HepG2 (cell line): ENCODE measurements at regions of chr12 and their contacts with region 1.

Region 1: GRCh38 chr12:575948-576612 is 87.2 kb downstream of the NINJ2 start:
- DNase-seq: peak; percentile 79
- ATAC-seq: peak; percentile 68
- H3K4me3 ChIP-seq: 0 out of 6 replicates have a peak overlapping the region, but pooled peaks of 1 of the 3 experiments have one; percentile 12
- H3K27ac ChIP-seq: peak overlapping the region; percentile 86
- H3K4me1 ChIP-seq: peaks cover 94% of the 10 kb centered on the region
- H3K27me3 ChIP-seq: no peaks in the 10 kb centered on the region; a peak in 1 of 5 replicates
- CTCF ChIP-seq: peak; percentile 93
- EP300 ChIP-seq: peak in 1 of 2 experiments; percentile 66; a peak in 2 of 4 replicates
- POLR2A ChIP-seq: 0 out of 4 replicates have a peak, but pooled peaks of 1 of the 2 experiments have one; percentile 39
- RAD21 ChIP-seq: peak; percentile 98

Region 2: DNA sequence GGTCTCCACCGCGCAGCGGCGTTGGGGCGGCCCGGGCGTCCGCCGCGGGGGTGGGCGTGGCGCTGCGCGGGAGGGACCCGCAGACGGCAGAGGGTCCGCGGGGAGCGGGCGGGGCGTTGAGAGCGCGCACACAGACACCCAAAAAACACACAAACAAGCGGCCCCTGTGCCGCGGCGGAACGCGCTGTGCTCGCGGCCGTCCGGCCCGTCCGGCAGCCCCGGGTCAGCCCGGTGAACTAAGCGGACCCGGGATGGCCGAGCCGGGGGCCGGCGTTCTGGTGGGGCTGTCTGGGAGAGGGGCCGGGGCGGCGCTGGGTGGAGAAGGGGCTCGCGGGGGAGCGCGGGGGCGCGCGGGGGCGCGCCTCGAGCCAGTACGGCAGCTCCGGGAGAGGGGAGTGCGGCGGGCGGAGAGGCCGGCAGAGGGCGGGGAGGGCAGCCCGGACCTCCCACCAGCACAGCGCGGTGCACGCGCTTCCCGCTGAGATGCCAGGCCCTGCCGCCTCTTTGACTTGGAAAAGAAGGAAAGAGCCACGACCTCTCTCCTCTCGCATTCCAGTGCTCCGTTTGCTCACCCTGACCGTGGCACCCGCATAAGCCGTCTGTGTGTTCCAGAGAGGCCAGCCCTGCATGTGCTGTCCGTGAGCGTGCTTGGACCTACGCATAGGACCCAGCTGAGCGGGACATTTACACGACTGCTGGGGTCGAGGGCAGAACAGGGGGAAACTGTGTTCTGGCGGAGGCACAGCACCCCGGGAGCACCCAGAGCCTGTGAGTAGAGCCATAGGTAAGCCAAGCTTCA is 372.4 kb before region 1 on chr12:
- CTCF ChIA-PET with region 1: no interaction called
- POLR2A ChIA-PET with region 1: no interaction called
- in situ Hi-C with region 1: no loop called
- intact Hi-C with region 1: no loop called
- DNase-seq: no peak
- ATAC-seq: no peak
- H3K4me3 ChIP-seq: no peak overlapping the region
- H3K27ac ChIP-seq: no peak overlapping the region
- H3K4me1 ChIP-seq: peaks cover 10% of the 10 kb centered on the region
- H3K27me3 ChIP-seq: no peaks in the 10 kb centered on the region
- CTCF ChIP-seq: no peak
- EP300 ChIP-seq: no peak
- POLR2A ChIP-seq: no peak
- RAD21 ChIP-seq: no peak

Region 3: DNA sequence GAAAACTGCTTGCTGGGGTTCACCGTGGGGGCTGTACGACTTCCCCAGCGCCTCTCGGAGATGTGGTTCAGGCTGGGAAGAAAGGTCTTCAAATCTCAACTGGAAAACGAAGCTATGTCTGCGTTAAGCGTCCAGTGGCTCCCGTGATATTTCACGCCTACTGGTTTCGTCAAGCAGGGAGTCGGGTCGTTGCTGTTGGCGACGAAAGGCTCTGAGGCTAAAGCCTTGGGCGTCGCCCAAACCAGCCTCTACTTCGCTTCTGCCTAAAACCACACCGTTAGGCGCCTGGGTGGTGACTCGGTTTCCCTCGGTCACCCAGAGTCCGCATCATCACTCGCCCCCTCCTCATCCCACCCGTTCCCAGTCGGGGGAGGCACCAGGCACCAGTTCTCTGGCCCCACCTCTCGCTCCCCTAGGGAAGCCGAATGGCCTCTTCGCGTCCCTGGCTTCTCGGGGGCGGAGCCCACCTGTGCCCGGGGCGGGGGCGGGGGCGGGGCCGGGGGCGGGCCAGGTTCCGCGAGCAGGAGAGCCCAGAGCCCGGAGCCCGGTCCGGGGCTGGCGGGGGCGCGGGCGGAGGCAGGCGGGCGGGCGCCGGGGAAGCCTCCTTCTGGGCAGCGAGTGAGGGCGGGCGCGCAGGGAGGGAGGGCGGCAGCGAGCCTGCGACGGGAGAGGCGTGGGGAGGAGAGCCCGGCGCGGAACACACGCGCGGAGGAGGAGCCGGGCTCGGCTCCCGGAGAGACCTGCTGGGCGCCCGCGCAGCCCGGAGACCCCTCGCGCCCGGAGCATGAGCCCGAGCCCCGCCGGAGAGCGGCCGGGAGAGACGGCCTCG is 116.4 kb before region 1 on chr12 and contains the start of gene B4GALNT3:
- CTCF ChIA-PET with region 1: no interaction called
- POLR2A ChIA-PET with region 1: no interaction called
- in situ Hi-C with region 1: no loop called
- intact Hi-C with region 1: no loop called
- DNase-seq: no peak
- ATAC-seq: peak; percentile 67
- H3K4me3 ChIP-seq: peak within 1 kb of the TSS; percentile 46 to 71 (median 64); a peak in 5 of 6 replicates
- H3K27ac ChIP-seq: no peak within 1 kb of the TSS
- H3K4me1 ChIP-seq: peaks cover 27% of the 10 kb centered on the region
- H3K27me3 ChIP-seq: peaks cover 4 to 38% of the 10 kb centered on the region in 2 experiments
- CTCF ChIP-seq: no peak
- EP300 ChIP-seq: no peak
- POLR2A ChIP-seq: no peak
- RAD21 ChIP-seq: no peak
- total RNA-seq, gene B4GALNT3: 2.9 and 4.4 TPM in 2 replicates

Region 4: GRCh38 chr12:546921-547845 is 28.9 kb before region 1 on chr12:
- CTCF ChIA-PET with region 1: no interaction called
- POLR2A ChIA-PET with region 1: no interaction called
- in situ Hi-C with region 1: no loop called
- intact Hi-C with region 1: no loop called
- DNase-seq: peak; percentile 33
- ATAC-seq: peak; percentile 87
- H3K4me3 ChIP-seq: no peak overlapping the region
- H3K27ac ChIP-seq: no peak overlapping the region
- H3K4me1 ChIP-seq: no peaks in the 10 kb centered on the region
- H3K27me3 ChIP-seq: no peaks in the 10 kb centered on the region
- CTCF ChIP-seq: peak; percentile 97
- EP300 ChIP-seq: no peak
- POLR2A ChIP-seq: no peak
- RAD21 ChIP-seq: peak; percentile 98

Region 5: DNA sequence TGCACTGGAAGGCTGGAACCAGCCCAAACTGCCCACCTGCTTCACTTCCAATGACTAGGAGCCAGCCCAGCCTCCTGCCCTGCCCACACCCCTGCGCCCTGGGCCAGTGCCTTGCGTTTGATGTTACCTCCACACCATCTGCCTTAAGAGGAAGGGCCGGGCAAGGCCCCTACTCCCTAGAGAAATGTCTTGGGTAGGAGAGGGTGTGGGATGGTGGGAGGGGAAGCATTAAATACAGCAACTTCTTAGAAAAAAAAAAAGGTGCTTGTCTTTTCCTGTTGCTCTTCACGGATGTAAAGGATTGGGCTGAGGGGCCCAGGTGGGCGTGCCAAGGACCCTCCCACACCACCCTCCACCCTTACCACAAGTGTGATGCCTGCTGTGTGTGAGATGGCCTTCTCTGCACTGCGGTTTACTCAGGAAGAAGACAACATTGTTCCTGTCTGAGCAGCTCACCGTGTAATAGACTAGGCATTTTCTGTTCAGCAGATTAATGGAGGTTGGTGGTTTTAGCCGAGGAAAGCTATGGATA is 12.8 kb before region 1 on chr12:
- CTCF ChIA-PET with region 1: no interaction called
- POLR2A ChIA-PET with region 1: no interaction called
- in situ Hi-C with region 1: no loop called
- intact Hi-C with region 1: no loop called
- DNase-seq: no peak
- ATAC-seq: no peak
- H3K4me3 ChIP-seq: no peak overlapping the region
- H3K27ac ChIP-seq: no peak overlapping the region
- H3K4me1 ChIP-seq: peaks cover 12% of the 10 kb centered on the region
- H3K27me3 ChIP-seq: peaks cover 3 to 6% of the 10 kb centered on the region in 2 experiments; a peak in 2 of 5 replicates
- CTCF ChIP-seq: no peak
- EP300 ChIP-seq: no peak
- POLR2A ChIP-seq: no peak
- RAD21 ChIP-seq: no peak

Region 6: GRCh38 chr12:614411-614970 is 38.4 kb after region 1 on chr12:
- CTCF ChIA-PET with region 1: no interaction called
- POLR2A ChIA-PET with region 1: interaction called, 3 read pairs
- in situ Hi-C with region 1: no loop called
- intact Hi-C with region 1: loop called (anchors 5 kb)
- DNase-seq: peak; percentile 31
- ATAC-seq: peak; percentile 61
- H3K4me3 ChIP-seq: no peak overlapping the region
- H3K27ac ChIP-seq: no peak overlapping the region
- H3K4me1 ChIP-seq: peaks cover 71% of the 10 kb centered on the region
- H3K27me3 ChIP-seq: no peaks in the 10 kb centered on the region
- CTCF ChIP-seq: peak; percentile 86
- EP300 ChIP-seq: no peak
- POLR2A ChIP-seq: no peak
- RAD21 ChIP-seq: peak; percentile 80

Region 7: GRCh38 chr12:630656-631632 is 54.9 kb after region 1 on chr12:
- CTCF ChIA-PET with region 1: no interaction called
- POLR2A ChIA-PET with region 1: interaction called, 11 read pairs
- in situ Hi-C with region 1: no loop called
- intact Hi-C with region 1: no loop called
- DNase-seq: no peak
- ATAC-seq: no peak
- H3K4me3 ChIP-seq: no peak overlapping the region
- H3K27ac ChIP-seq: peak overlapping the region; percentile 83
- H3K4me1 ChIP-seq: peaks cover 61% of the 10 kb centered on the region
- H3K27me3 ChIP-seq: no peaks in the 10 kb centered on the region; a peak in 1 of 5 replicates
- CTCF ChIP-seq: no peak
- EP300 ChIP-seq: no peak
- POLR2A ChIP-seq: no peak
- RAD21 ChIP-seq: no peak

Region 8: GRCh38 chr12:642633-643474 is 66.8 kb after region 1 on chr12:
- CTCF ChIA-PET with region 1: no interaction called
- POLR2A ChIA-PET with region 1: interaction called, 5 read pairs
- in situ Hi-C with region 1: no loop called
- intact Hi-C with region 1: loop called (anchors 10 kb)
- DNase-seq: no peak
- ATAC-seq: no peak
- H3K4me3 ChIP-seq: no peak overlapping the region
- H3K27ac ChIP-seq: no peak overlapping the region
- H3K4me1 ChIP-seq: peaks cover 62% of the 10 kb centered on the region
- H3K27me3 ChIP-seq: no peaks in the 10 kb centered on the region
- CTCF ChIP-seq: no peak
- EP300 ChIP-seq: no peak
- POLR2A ChIP-seq: no peak
- RAD21 ChIP-seq: no peak

Region 9: DNA sequence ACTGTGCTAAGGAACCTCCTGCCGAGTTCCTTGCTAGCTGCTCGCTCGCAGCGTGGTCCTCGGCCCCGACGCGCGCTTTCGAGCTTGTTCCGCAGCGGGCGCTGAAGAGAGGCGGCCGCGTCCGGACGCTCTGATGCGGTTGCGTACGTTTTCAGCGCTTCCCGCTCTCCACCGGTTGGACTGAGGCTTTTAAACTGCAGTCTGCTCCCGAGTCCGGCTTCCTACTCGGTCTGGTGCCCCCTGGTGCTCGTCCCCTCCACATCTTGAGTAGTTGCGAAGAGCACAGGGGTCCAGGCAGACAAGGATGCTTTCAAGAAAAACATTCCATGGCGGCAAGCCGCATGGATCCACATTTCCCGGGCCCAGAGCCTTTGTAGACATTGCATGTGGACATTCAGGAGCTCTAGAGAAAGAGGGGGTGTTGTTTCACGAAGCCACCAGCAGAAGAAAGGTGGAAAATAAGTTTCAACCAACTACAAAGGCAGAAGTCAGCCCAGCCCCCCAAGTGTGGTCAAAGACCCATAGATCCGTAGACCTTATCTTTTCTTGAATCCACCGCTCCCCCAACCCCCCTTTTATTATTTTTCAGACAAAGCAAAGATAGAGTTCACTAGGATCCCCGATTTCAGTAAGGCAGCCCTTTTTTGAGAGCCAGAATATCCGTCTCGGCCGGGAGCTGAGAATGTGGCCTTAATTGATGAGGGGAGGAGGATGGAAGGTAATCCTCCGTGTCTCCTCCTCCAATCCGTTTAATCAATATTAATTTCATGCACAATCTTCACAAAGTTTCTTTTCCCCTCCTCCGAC is 175.3 kb after region 1 on chr12:
- CTCF ChIA-PET with region 1: interaction called, 28 read pairs
- POLR2A ChIA-PET with region 1: interaction called, 42 read pairs
- in situ Hi-C with region 1: loop called (anchors 5 kb)
- intact Hi-C with region 1: loop called (anchors 1 kb)
- DNase-seq: peak; percentile 91
- ATAC-seq: peak; percentile 71
- H3K4me3 ChIP-seq: peak overlapping the region; percentile 65 to 71 (median 67)
- H3K27ac ChIP-seq: peak overlapping the region; percentile 64
- H3K4me1 ChIP-seq: peaks cover 17% of the 10 kb centered on the region
- H3K27me3 ChIP-seq: no peaks in the 10 kb centered on the region; a peak in 1 of 5 replicates
- CTCF ChIP-seq: peak; percentile 97
- EP300 ChIP-seq: peak in 1 of 2 experiments; percentile 34; a peak in 2 of 4 replicates
- POLR2A ChIP-seq: peak; percentile 61 to 68
- RAD21 ChIP-seq: peak; percentile 94

Region 10: GRCh38 chr12:810671-811415 is 234.8 kb after region 1 on chr12:
- CTCF ChIA-PET with region 1: no interaction called
- POLR2A ChIA-PET with region 1: no interaction called
- in situ Hi-C with region 1: loop called (anchors 10 kb)
- intact Hi-C with region 1: no loop called
- DNase-seq: no peak
- ATAC-seq: no peak
- H3K4me3 ChIP-seq: no peak overlapping the region
- H3K27ac ChIP-seq: no peak overlapping the region
- H3K4me1 ChIP-seq: peaks cover 14% of the 10 kb centered on the region
- H3K27me3 ChIP-seq: no peaks in the 10 kb centered on the region
- CTCF ChIP-seq: no peak
- EP300 ChIP-seq: no peak
- POLR2A ChIP-seq: no peak
- RAD21 ChIP-seq: no peak

Region 11: DNA sequence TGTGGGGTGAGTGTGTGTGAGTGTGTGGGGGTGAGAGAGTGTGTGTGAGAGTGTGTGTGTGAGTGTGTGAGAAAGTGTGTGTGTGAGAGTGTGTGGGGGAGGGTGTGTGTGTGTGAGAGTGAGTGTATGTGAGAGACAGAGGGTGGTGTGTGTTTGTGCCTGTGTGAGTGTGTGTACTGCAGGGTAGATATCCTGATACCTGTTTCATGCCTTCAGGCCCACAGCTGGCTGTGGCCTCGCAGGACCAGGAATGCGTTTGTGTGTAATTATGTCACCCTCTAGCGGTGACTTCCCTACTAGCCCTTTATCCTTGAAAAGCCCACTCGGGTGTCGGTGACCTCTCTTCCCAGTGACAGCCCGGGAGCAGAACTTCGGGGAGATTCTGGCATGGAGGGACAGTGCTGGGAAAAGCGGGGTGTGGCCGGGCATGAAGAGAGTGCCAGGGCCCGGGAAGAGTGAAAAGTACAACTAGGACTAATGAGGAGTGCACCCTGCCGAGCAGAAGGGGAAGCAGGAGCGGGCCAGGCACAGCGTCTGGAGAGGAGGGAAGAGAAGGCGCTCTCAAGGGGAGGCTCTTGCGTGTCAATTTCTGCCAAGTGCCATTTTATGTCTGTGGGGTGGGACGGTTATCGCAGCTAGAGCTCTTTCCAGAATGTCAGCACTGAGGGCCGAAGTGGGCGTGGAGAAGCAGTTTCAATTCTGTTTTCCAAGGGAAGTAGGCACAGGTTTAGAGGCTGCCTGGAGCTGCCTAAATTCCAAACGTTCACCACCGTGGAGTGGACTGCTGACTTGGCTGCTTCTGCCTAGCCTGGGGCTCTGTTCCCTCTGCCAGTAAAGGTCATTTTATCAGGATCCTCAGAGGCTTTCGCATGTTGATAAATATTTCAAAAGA is 1029.3 kb after region 1 on chr12:
- CTCF ChIA-PET with region 1: no interaction called
- POLR2A ChIA-PET with region 1: no interaction called
- in situ Hi-C with region 1: no loop called
- intact Hi-C with region 1: loop called (anchors 10 kb)
- DNase-seq: peak; percentile 70
- ATAC-seq: peak; percentile 79
- H3K4me3 ChIP-seq: peak overlapping the region; percentile 40 to 77 (median 49)
- H3K27ac ChIP-seq: peak overlapping the region; percentile 38
- H3K4me1 ChIP-seq: peaks cover 78% of the 10 kb centered on the region
- H3K27me3 ChIP-seq: peaks cover 0 to 9% of the 10 kb centered on the region in 2 experiments; a peak in 2 of 5 replicates
- CTCF ChIP-seq: peak; percentile 93
- EP300 ChIP-seq: no peak
- POLR2A ChIP-seq: no peak
- RAD21 ChIP-seq: peak; percentile 73